Ascending aorta (tissue), 2 donors: ENCODE measurements at regions of chr9 and their contacts with region 1.

Region 1: DNA sequence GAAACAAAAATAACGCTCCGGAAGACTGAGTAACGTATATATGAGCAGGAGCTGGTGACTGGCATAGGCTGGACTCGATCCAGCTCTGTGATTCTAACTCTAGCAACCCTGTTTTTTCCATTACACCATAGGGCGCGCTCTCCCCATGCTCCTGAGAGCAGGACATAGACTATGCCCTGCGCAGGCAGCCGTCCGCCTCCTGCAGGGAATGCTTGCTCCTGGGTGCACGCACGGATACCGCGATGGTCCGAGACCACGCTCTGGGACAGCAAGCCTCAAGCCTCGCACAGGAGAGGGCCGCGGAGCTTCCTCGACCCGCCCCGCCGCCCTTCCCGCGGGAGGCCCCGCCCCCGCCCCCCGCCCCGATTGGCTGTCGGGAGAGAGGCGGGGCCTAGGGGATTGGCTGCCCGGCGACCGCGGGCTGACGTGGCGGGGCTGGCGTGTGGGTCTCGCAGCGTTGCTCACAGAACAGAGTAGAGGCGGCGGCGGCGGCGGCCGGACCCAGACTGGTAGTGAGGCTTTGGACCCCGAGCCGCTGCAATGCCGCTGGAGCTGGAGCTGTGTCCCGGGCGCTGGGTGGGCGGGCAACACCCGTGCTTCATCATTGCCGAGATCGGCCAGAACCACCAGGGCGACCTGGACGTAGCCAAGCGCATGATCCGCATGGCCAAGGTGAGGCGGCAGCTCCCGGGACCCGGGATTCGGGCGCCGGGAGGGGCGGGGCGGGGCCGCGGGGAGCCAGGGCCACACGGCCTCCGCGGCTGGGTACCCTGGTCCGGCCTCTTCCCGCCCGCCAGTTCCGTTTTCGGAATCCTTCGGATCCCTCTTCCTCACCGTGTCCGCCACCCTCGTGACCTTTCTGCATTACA is at the start of gene NANS:
- DNase-seq: peak; percentile 80 to 96
- H3K4me3 ChIP-seq: peak within 1 kb of the TSS; percentile 86 to 96
- H3K27ac ChIP-seq: peak within 1 kb of the TSS; percentile 95 to 98
- H3K4me1 ChIP-seq: peaks cover 0 to 10% of the 10 kb centered on the region in 2 donors
- H3K27me3 ChIP-seq: no peaks in the 10 kb centered on the region
- CTCF ChIP-seq: no peak
- total RNA-seq, gene NANS: 40.7 TPM

Region 2: DNA sequence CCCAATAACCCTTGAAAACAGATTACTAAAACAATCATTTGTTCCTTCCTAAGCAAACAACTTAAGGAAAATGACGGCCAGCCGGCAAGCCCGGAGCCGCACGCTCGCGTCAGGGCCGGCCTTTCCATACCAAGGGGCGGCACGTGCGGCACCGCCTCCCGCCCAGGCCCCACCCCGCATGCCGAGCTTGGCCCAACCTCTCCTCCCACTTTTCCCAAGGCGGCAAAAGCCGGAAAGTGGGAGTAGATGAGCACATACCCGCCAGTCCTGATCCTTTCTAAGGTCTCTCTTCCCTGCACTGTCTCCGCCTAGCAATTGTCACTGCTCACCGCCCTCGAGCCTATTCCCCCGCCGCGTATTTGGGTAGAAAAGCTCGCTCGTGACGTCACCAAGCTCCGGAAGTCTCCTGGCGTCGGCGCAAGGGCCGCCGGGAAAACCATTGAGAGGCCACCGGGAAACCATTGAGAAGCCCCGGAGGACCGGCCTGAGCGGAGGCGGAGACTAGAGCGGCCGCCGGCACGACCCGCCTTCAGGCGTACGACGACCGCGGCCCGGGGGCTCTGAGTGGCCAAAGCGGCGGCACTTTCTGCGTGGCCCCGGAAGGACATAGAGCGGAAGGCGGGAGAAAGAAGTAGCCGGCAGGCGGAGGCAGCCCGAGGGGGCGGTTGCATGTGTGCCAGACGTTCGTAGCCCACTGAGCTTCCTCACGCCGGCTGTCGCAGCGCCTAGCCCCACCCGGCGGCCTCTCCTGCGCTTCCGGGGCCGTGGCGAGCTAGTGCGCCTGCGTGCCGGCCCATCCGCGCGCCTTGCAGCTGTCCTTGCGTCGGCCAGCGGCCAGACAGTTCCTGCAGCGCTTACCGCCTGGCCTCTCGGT is 423.3 kb before region 1 on chr9 and contains the starts of genes NCBP1 and TSTD2:
- intact Hi-C with region 1: loop called (anchors 5 kb)
- DNase-seq: peak; percentile 91 to 98
- H3K4me3 ChIP-seq: peak within 1 kb of the TSS; percentile 81 to 89
- H3K27ac ChIP-seq: peak within 1 kb of the TSS; percentile 97 to 98
- H3K4me1 ChIP-seq: peaks cover 10 to 25% of the 10 kb centered on the region in 2 donors
- H3K27me3 ChIP-seq: no peaks in the 10 kb centered on the region
- CTCF ChIP-seq: no peak
- total RNA-seq, gene NCBP1: 5.1 TPM
- total RNA-seq, gene TSTD2: 1.4 TPM

Region 3: DNA sequence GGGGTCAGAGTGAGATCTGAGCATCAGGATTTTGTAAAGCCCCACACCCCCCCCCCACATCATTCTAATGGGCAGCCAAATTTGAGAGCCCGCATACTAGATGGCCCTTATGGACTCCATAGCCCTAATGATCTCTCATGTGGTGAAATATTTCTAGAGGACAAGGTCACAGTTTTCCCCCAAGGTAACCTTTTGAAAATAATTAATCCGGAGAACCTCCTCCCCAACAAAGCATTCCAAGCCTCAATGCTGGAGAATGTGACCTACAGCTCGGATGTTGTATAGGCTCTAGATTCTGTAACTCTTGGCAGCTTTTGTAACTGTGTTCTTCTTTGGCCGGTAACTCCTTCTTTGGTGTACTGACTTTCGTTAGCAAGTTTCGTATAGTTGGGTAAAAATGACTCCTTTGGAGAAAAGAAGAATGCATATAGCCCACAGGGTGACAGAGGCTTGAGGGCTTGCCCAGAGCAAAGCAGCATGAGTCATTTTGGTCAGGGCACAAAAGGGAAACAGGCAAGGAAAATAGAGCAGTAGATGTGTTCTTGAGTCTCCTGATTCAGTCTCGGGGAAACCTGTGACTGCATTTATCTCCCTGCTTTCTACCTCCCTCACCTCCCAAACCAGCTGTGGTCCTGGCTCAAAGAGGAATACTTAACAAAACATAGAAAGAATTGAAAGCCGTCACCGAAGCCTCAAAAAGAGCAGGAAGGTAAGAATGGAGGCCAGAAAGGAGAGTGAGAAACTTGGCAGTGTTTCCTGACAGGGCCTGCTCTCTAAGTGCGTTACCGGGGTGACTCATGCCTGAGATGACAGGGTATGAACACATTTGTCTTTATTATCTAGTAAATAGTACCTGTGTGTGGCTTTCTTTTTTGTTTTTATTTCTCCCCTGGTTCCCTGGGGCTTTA is 352.8 kb before region 1 on chr9:
- intact Hi-C with region 1: loop called (anchors 5 kb)
- DNase-seq: peak in 1 of 2 donors; percentile 80
- H3K4me3 ChIP-seq: no peak overlapping the region
- H3K27ac ChIP-seq: peak overlapping the region; percentile 82
- H3K4me1 ChIP-seq: peaks cover 0 to 17% of the 10 kb centered on the region in 2 donors
- H3K27me3 ChIP-seq: no peaks in the 10 kb centered on the region
- CTCF ChIP-seq: no peak

Region 4: DNA sequence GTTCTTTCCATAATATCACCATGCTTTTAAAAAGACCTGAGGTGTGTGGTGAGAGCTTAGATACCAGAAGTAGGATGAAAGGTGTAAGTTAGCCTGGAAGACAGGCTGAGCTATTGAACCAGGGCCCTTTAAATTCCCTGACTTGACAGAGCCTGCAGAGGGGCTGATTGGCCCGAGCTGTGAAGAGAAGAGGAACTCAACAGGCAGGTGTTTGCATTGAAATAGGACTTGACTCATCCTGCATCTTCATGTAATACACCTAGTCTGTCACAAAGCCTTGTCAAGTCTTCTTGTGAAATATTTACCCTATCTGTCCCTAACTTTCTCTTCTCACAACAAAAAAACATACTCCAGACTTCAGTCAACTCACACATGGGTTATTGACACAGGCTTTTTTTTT is 90.0 kb before region 1 on chr9:
- intact Hi-C with region 1: no loop called
- DNase-seq: no peak
- H3K4me3 ChIP-seq: no peak overlapping the region
- H3K27ac ChIP-seq: no peak overlapping the region
- H3K4me1 ChIP-seq: no peaks in the 10 kb centered on the region
- H3K27me3 ChIP-seq: no peaks in the 10 kb centered on the region
- CTCF ChIP-seq: no peak

Region 5: GRCh38 chr9:97982683-97983588 is 73.6 kb before region 1 on chr9 and contains the start of gene ANP32B:
- intact Hi-C with region 1: loop called (anchors 1 kb)
- DNase-seq: peak; percentile 63 to 95
- H3K4me3 ChIP-seq: peak within 1 kb of the TSS; percentile 86 to 91
- H3K27ac ChIP-seq: peak within 1 kb of the TSS; percentile 97 to 99
- H3K4me1 ChIP-seq: peaks cover 7 to 17% of the 10 kb centered on the region in 2 donors
- H3K27me3 ChIP-seq: no peaks in the 10 kb centered on the region
- CTCF ChIP-seq: peak; percentile 65 to 98 (median 71)
- total RNA-seq, gene ANP32B: 13.9 TPM

Region 6: GRCh38 chr9:98034593-98035546 is 21.6 kb before region 1 on chr9:
- intact Hi-C with region 1: loop called (anchors 1 kb)
- DNase-seq: peak; percentile 44 to 93
- H3K4me3 ChIP-seq: peak overlapping the region in 1 of 2 donors; percentile 30
- H3K27ac ChIP-seq: peak overlapping the region; percentile 52 to 74
- H3K4me1 ChIP-seq: peaks cover 0 to 10% of the 10 kb centered on the region in 2 donors
- H3K27me3 ChIP-seq: no peaks in the 10 kb centered on the region
- CTCF ChIP-seq: peak; percentile 72 to 83 (median 81)

Region 7: DNA sequence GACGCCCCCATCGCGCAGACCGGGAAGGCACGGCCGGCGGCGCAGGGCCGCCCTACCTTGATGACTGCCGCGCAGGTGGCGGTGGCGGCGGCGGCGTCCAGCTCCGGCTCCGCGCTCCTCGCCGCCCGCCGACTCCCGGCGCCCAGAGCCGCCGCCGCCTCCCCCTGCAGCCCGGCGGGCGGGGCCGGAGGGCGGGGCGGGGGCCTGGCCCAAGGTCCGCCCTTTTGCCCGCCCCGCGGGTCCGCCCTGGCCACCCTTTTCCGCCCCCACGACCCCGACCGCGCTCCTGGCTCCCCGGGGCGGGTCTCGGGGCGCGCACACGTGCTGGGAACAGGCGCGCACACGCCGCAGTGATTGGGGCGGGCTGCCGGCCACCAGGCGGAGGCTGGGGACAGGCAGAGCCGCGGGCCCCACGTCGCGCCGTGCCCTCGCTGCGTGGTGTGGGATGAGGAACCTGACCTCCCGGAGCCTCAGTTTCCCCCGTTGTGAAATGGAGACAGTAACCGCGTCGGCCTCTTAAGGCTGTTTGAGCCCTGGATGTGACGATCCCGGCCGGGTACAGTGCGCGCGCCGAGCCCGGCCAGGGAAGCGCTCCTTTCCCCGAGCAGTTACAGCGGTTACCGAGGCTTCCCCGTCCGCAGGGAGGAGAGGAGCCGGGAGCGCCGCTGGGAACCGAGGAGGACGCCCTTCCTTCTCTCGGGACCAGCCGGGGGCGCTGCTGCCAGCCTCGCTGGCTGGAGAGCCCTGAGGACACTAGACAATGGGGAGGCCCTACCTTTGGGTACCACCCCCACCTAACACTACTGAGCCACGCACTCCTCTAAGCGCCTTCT is 136.2 kb after region 1 on chr9 and contains the start of gene CORO2A:
- intact Hi-C with region 1: loop called (anchors 2 kb)
- DNase-seq: peak in 1 of 2 donors; percentile 83
- H3K4me3 ChIP-seq: peak within 1 kb of the TSS; percentile 73 to 83
- H3K27ac ChIP-seq: peak within 1 kb of the TSS; percentile 18 to 61
- H3K4me1 ChIP-seq: no peaks in the 10 kb centered on the region
- H3K27me3 ChIP-seq: no peaks in the 10 kb centered on the region
- CTCF ChIP-seq: peak in 2 of 3 experiments; percentile 10 to 49
- total RNA-seq, gene CORO2A: 9.0 TPM

Region 8: DNA sequence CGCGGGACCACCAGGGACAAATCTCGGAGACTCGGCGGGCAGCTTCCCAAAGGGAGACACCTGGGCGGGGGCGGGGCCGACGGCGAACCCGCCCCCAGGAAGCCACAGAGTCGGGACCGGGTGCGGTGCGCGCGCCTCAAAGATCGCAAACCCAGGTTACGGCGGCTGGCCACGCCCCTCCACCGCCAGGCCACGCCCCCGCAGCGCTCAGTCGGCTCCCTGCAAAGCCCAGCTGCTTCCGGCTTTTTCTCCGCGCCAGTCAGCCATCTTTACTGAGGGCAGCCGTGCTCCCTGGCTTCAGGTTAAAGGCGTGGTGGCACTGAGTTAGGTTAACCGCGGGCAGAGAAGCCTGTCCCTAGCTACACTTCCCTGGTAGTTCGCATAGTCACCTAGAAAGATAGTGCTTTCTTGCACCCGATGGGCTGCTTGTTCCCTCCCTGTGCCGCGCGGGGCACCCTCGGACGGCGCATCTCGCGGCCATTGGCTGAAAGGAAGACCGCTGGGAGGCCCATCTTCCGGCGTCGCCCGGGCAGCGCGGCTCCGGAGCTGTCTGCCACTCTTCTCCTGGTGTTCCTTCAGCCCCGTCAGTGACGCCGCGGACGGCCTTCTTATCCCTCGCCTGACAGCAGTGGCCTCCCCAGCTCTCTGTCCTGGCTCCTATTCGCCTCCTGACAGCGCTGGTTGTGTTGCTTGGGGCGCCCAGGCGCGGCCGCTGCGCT is 199.2 kb after region 1 on chr9 and contains the start of gene TBC1D2:
- intact Hi-C with region 1: loop called (anchors 2 kb)
- DNase-seq: peak; percentile 81 to 97
- H3K4me3 ChIP-seq: peak within 1 kb of the TSS; percentile 71 to 72
- H3K27ac ChIP-seq: peak within 1 kb of the TSS; percentile 91 to 95
- H3K4me1 ChIP-seq: peaks cover 0 to 15% of the 10 kb centered on the region in 2 donors
- H3K27me3 ChIP-seq: no peaks in the 10 kb centered on the region
- CTCF ChIP-seq: peak in 1 of 3 experiments; percentile 10
- total RNA-seq, gene TBC1D2: 32.5 TPM